ENCODE measurements at regions of chr4 and their contacts with region 1.

Region 1: DNA sequence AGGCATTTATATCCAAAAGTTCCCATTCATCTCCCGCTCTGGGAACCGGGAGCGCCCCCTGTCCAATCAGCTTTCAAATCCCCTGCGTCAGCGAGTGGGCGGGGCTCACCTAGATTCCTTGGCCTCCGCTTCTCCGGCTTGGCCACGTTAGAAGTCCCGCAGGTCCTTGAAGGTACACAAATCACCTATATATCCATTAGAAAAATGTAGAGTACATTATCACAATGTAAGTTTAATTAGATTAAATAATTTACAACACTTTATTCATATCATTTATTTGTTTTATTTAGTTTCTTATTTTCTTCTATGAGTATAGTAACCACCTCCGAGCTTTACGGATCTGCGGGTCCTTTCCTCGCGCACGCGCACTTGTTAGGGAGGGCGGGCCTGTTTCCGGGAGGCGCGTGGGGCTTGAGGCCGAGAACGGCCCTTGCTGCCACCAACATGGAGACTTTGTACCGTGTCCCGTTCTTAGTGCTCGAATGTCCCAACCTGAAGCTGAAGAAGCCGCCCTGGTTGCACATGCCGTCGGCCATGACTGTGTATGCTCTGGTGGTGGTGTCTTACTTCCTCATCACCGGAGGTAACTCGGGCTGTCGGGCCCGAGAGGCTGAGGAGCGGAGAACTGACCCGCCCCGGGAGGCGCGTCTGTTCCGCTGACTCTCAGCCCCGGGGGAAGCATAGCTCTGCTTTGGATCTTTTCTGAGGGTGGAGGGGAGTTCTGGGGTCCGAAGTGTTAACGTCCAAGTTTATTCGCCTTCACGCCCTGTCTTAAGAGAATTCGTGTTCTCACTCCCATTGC is at the start of gene OSTC:
- DNase-seq: peak; percentile 95
- H3K4me3 ChIP-seq: peak within 1 kb of the TSS; percentile 95 to 99 (median 96)
- H3K27ac ChIP-seq: peak within 1 kb of the TSS; percentile 88
- H3K4me1 ChIP-seq: peaks cover 13% of the 10 kb centered on the region
- H3K27me3 ChIP-seq: no peaks in the 10 kb centered on the region
- CTCF ChIP-seq: no peak
- POLR2A ChIP-seq: peak; percentile 87
- total RNA-seq, gene OSTC: 196 and 209 TPM in 2 replicates

Region 2: DNA sequence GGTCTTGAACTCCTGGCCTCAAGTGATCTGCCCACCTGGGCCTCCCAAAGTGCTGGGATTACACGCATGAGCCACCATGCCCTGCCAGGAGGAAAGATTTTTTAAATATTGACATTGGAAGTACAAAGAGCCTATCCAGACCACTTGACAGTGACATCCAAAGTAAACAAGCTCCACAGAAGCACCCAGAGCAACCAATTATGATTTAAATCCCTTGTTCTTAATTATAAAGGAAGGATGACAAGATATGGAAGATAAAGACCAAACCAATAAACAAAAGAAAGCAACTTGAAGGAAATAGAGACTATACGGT is 57.8 kb before region 1 on chr4:
- CTCF ChIA-PET with region 1: no interaction called
- POLR2A ChIA-PET with region 1: no interaction called
- dilution Hi-C with region 1: no loop called
- intact Hi-C with region 1: loop called (anchors 1 kb)
- DNase-seq: peak; percentile 24
- H3K4me3 ChIP-seq: no peak overlapping the region
- H3K27ac ChIP-seq: peak overlapping the region; percentile 93
- H3K4me1 ChIP-seq: peaks cover 18% of the 10 kb centered on the region
- H3K27me3 ChIP-seq: no peaks in the 10 kb centered on the region
- CTCF ChIP-seq: no peak
- POLR2A ChIP-seq: no peak

Region 3: GRCh38 chr4:108620101-108620932 is 30.1 kb before region 1 on chr4 and contains the start of gene RPL34:
- CTCF ChIA-PET with region 1: interaction called, 9 read pairs
- POLR2A ChIA-PET with region 1: interaction called, 11 read pairs
- dilution Hi-C with region 1: no loop called
- intact Hi-C with region 1: loop called (anchors 1 kb)
- DNase-seq: peak; percentile 99
- H3K4me3 ChIP-seq: peak within 1 kb of the TSS; percentile 49 to 95 (median 74)
- H3K27ac ChIP-seq: peak within 1 kb of the TSS; percentile 81
- H3K4me1 ChIP-seq: peaks cover 23% of the 10 kb centered on the region
- H3K27me3 ChIP-seq: no peaks in the 10 kb centered on the region
- CTCF ChIP-seq: no peak
- POLR2A ChIP-seq: peak; percentile 97
- total RNA-seq, gene RPL34: 1,114 and 1,139 TPM in 2 replicates

Region 4: DNA sequence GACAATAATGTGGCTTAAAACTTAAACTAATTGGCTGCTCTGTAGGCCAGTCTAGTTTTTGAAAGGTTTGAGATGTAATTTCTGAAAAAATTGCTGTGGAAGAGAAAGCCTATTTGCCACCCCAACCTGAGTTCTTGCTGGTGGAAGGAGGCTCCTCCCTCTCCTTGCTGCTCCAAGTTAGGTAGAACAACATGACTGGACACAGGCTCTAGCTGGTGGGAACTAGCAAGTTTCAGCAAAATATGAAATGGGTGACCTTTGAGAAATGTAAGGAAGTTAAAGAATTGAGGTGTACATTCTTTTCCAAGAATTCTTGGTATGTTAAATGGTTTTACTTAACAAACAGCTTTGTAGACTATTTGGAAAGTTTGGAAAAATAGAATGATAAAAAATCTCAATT is 22.0 kb before region 1 on chr4:
- CTCF ChIA-PET with region 1: interaction called, 3 read pairs
- POLR2A ChIA-PET with region 1: interaction called, 14 read pairs
- dilution Hi-C with region 1: no loop called
- intact Hi-C with region 1: no loop called
- DNase-seq: no peak
- H3K4me3 ChIP-seq: no peak overlapping the region
- H3K27ac ChIP-seq: no peak overlapping the region
- H3K4me1 ChIP-seq: no peaks in the 10 kb centered on the region
- H3K27me3 ChIP-seq: no peaks in the 10 kb centered on the region
- CTCF ChIP-seq: no peak
- POLR2A ChIP-seq: no peak

Region 5: DNA sequence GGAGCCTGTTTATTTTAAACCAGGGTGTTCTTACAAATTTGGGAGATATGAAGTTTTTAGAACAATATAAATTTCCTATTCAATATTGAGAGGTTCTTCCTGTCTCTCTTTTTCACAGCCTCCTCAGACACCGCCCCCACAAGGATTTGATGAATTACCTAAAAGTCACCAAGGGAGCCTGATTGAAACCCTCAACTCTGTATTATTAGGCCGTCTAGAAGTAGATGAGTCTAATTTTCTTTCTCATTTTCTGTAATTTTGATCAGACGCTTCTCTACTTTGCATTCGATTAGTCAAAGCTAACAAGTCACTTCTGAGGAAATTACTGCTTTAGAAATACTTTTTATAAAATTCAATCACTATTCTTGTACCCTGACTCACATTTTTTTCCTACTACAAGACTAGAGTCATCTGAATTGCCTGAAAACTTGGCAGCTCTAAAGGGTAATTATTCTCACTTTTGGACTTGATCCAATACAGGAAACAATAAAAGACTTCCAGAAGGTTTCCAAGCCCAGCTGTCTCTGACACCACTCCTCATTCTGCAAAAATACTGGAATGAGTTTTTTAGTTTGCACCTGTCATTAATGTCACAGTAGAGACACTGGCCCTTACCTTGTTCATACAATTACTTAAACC is 1436.8 kb after region 1 on chr4:
- CTCF ChIA-PET with region 1: no interaction called
- POLR2A ChIA-PET with region 1: no interaction called
- dilution Hi-C with region 1: no loop called
- intact Hi-C with region 1: no loop called
- DNase-seq: peak; percentile 91
- H3K4me3 ChIP-seq: no peak overlapping the region
- H3K27ac ChIP-seq: no peak overlapping the region
- H3K4me1 ChIP-seq: peaks cover 35% of the 10 kb centered on the region
- H3K27me3 ChIP-seq: no peaks in the 10 kb centered on the region
- CTCF ChIP-seq: no peak
- POLR2A ChIP-seq: no peak

Region 6: DNA sequence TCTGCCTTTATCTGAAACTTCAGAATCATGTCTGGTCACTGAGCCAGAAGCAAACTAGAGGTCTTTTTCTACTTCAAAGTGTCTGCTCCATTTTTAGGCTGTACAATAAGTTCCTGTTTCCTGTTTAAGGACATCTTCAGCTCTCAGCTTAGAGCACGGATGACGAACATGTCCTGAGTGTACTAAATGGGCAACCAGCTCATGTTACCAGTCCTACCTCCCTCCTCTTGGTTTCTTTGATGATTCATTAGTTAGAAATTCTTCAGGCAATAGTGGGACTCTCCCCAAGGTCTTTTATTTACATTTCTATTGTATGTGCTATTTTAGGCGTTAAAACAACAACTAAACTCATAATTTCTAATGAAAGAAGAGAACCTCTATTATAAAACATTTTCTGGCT is 1883.5 kb after region 1 on chr4:
- CTCF ChIA-PET with region 1: no interaction called
- POLR2A ChIA-PET with region 1: no interaction called
- dilution Hi-C with region 1: no loop called
- intact Hi-C with region 1: loop called (anchors 5 kb)
- DNase-seq: peak; percentile 94
- H3K4me3 ChIP-seq: peak overlapping the region in 1 of 3 experiments; percentile 54
- H3K27ac ChIP-seq: peak overlapping the region; percentile 94
- H3K4me1 ChIP-seq: peaks cover 38% of the 10 kb centered on the region
- H3K27me3 ChIP-seq: no peaks in the 10 kb centered on the region
- CTCF ChIP-seq: no peak
- POLR2A ChIP-seq: no peak

Measured in endothelial cell of umbilical vein (primary cell).